Body of pancreas (tissue), 4 donors: ENCODE measurements at regions of chr11 and their contacts with region 1.

Region 1: GRCh38 chr11:8309862-8310261 is 46.2 kb upstream of the LMO1 start:
- DNase-seq: peak; percentile 23 to 54 (median 38)
- ATAC-seq: peak; percentile 66
- H3K4me3 ChIP-seq: no peak overlapping the region
- H3K27ac ChIP-seq: no peak overlapping the region
- H3K4me1 ChIP-seq: no peaks in the 10 kb centered on the region
- H3K27me3 ChIP-seq: no peaks in the 10 kb centered on the region
- CTCF ChIP-seq: peak; percentile 29 to 69 (median 61)
- POLR2A ChIP-seq: no peak

Region 2: DNA sequence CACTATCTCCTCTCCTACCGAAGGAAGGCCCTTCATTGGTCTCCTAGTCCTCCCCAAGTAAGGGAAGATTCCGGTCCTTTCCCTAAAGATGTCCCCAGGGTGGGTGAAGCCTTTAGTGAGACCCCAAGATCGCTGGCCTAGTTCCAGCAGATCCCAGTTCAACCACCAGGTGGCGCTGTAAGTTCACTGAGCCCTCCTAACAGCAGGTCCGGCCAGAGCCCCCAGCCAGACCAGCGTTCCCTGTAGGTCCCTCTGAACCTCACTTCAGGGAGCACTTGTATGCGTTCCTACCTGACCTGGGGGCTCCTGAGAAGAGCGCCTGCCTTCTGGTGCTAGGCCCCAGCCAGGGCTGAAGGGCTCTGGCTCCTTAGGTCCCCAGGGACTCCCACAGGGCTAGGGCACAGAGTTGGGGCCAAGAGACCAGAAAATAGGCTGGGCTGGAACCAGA is 84.2 kb before region 1 on chr11:
- intact Hi-C with region 1: loop called (anchors 5 kb)
- DNase-seq: peak; percentile 67 to 84 (median 72)
- ATAC-seq: peak; percentile 57
- H3K4me3 ChIP-seq: no peak overlapping the region
- H3K27ac ChIP-seq: no peak overlapping the region
- H3K4me1 ChIP-seq: peaks cover 17% of the 10 kb centered on the region
- H3K27me3 ChIP-seq: no peaks in the 10 kb centered on the region
- CTCF ChIP-seq: peak; percentile 76 to 94 (median 86)
- POLR2A ChIP-seq: no peak